ENCODE measurements at regions of chr18 and their contacts with region 1.

Region 1: DNA sequence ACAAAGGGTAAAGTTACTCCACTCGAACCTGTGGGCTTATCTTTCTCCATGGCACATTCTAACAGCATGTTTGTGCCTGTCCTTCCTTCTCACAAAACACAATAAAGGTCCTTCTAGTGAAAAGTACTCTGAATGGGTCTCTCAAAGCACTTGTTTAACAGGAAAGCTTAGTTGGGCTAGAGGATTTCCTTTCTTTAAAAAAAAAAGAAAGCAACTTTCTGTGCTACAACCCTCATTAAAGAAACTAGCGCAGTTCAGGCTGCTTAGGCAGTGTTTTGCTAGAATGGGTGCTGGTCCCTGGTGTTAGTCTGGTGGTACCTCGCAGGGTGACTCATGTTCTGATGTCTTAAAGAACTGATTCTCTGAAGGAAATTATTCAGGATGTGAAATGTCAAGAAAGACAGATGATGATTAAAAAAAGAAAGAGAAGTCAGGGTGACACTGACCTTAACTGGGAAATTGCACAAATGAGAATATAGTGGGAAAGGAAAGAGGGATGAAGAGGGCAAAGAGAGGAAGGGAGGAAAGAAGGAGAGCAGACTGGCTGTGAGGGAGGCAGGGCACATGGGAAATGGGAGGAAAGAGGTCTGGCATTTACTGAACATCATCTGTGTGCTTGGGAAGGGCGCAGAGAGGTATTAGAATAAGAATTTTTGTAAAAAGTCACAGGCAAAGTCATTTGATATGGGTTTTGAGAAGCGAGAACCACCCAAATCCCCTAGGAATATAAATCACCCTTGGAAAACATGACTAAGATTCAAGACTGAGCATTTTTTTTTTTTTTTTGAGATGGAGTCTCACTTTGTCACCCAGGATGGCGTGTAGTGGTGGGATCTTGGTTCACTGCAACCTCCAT is 74.9 kb downstream of the ATP8B1 start:
- DNase-seq: peak; percentile 96
- H3K4me3 ChIP-seq: no peak overlapping the region
- H3K27ac ChIP-seq: peak overlapping the region; percentile 45
- H3K4me1 ChIP-seq: peaks cover 23% of the 10 kb centered on the region
- H3K27me3 ChIP-seq: no peaks in the 10 kb centered on the region
- CTCF ChIP-seq: no peak
- POLR2A ChIP-seq: no peak

Region 2: GRCh38 chr18:57691363-57691762 is 36.8 kb before region 1 on chr18:
- CTCF ChIA-PET with region 1: no interaction called
- POLR2A ChIA-PET with region 1: no interaction called
- dilution Hi-C with region 1: no loop called
- intact Hi-C with region 1: loop called (anchors 5 kb)
- DNase-seq: no peak
- H3K4me3 ChIP-seq: no peak overlapping the region
- H3K27ac ChIP-seq: no peak overlapping the region
- H3K4me1 ChIP-seq: peaks cover 10% of the 10 kb centered on the region
- H3K27me3 ChIP-seq: no peaks in the 10 kb centered on the region
- CTCF ChIP-seq: no peak
- POLR2A ChIP-seq: no peak

Region 3: DNA sequence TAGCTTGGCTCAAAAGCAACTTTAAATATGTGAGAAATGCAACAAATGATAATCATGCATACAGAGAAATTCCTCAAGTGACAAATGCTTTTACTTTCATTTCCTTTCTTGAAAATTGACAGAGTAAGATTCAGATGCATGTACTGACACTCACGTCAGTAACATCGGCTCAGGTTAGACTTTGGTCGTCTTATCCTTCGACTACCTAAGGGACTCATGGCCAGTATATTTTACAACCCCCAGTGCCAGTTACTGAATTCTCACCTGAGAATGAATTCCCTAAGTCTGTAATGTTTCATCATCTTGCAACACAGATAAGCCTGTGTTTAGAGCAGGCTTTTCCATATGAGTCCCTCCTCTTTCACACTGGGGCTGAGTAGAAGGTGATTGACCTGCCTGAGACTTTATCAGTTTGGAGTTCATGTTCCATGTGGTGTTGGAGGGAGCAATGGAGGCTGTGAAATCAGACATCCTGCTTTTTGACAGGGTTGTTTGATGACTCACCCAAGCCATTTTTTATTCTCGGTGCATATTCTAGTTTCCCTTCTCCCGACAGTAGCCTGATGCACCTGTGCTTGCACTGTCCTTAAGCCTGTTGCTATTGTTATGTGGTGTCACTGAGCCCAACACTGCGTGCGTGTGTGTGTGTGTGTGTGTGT is 105.4 kb after region 1 on chr18:
- CTCF ChIA-PET with region 1: no interaction called
- POLR2A ChIA-PET with region 1: no interaction called
- dilution Hi-C with region 1: no loop called
- intact Hi-C with region 1: no loop called
- DNase-seq: peak; percentile 71
- H3K4me3 ChIP-seq: no peak overlapping the region
- H3K27ac ChIP-seq: no peak overlapping the region
- H3K4me1 ChIP-seq: peaks cover 15% of the 10 kb centered on the region
- H3K27me3 ChIP-seq: no peaks in the 10 kb centered on the region
- CTCF ChIP-seq: no peak
- POLR2A ChIP-seq: no peak